MCF 10A (cell line): ENCODE measurements at regions of chr9 and their contacts with region 1.

Region 1: DNA sequence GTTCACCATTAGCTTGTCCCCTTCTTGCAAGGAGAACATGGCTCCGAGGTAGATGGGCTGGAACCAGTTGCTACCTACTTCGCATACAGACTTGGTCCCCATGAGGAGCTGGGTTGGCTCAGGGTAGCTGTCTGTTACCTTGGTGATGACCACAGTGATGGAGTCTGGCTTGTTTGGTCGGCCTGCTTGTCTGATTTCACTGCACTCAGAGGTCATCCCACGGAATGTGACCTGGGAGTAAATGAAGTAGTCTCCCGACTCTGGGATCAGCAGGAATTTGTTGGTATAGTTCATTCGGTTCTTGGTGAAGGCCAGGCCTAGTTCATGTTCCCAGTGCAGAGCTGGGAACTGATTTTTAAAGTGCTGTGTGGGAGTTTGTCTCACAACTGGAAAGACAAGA is 15.3 kb downstream of the TNFSF15 start:
- DNase-seq: no peak
- H3K4me3 Mint-ChIP-seq: no peak overlapping the region
- H3K27ac Mint-ChIP-seq: no peak overlapping the region
- H3K4me1 Mint-ChIP-seq: peaks cover 11% of the 10 kb centered on the region
- H3K27me3 Mint-ChIP-seq: no peaks in the 10 kb centered on the region
- CTCF ChIP-seq: no peak

Region 2: GRCh38 chr9:114805670-114806525 is 15.4 kb after region 1 on chr9 and contains the start of gene TNFSF15:
- CTCF ChIA-PET with region 1: interaction called, 8 read pairs
- POLR2A ChIA-PET with region 1: interaction called, 13 read pairs
- intact Hi-C with region 1: no loop called
- DNase-seq: peak; percentile 72
- H3K4me3 Mint-ChIP-seq: peak within 1 kb of the TSS; percentile 62
- H3K27ac Mint-ChIP-seq: peak within 1 kb of the TSS; percentile 77
- H3K4me1 Mint-ChIP-seq: peaks cover 26% of the 10 kb centered on the region
- H3K27me3 Mint-ChIP-seq: no peaks in the 10 kb centered on the region
- CTCF ChIP-seq: no peak
- total RNA-seq, gene TNFSF15: 0.39 and 1.9 TPM in 2 replicates